Mammary epithelial cell (primary cell): ENCODE measurements at regions of chr20 and their contacts with region 1.

Region 1: DNA sequence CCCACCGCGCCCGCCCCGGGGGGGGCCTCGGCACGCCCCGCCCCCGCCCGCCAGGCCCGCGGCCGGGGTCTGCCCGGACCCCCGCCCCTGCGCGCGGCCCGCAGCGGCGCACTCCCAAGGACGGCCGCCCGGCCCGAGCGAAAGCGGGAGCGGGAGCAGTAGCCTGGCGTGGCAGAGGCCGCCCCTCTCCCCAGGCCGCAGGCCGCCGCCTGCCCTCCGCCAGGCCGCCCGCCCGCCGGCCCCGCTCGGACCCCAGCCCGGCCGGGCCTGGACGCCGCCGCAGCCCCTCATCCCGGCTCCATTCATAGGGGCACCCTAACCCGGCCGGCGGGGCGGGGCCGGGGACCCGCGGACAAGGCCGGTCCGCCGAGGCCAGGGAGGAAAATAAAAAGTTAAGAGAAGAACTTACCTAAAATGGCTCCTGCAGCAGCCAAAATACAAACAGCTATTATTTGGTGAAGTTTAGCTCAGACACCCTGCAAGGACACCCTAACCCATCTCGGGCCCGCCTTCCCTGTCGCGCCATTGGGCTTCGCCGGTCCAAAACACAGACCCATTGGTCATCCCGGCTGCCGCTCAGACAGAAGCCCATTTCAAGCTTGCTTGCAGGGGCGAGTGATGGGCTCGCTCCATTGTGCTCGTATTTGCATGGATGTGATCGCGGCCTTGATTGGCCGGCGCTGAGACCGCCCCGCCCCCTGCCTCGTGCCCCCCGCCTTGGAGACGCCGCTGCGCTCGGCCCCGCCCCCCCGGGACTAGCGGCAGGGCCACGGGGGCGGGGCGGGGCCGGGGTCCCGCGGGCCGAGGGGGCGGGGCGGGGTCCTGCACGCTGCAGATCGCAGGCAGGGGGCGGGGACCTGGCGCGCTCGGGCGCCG is at the start of gene CHD6:
- DNase-seq: peak; percentile 99
- H3K4me3 ChIP-seq: peak within 1 kb of the TSS; percentile 71 to 91 (median 74)
- H3K27ac ChIP-seq: peak within 1 kb of the TSS; percentile 71
- H3K4me1 ChIP-seq: peaks cover 12% of the 10 kb centered on the region
- H3K27me3 ChIP-seq: no peaks in the 10 kb centered on the region
- CTCF ChIP-seq: no peak
- total RNA-seq, gene CHD6: 27.0 to 28.2 TPM

Region 2: DNA sequence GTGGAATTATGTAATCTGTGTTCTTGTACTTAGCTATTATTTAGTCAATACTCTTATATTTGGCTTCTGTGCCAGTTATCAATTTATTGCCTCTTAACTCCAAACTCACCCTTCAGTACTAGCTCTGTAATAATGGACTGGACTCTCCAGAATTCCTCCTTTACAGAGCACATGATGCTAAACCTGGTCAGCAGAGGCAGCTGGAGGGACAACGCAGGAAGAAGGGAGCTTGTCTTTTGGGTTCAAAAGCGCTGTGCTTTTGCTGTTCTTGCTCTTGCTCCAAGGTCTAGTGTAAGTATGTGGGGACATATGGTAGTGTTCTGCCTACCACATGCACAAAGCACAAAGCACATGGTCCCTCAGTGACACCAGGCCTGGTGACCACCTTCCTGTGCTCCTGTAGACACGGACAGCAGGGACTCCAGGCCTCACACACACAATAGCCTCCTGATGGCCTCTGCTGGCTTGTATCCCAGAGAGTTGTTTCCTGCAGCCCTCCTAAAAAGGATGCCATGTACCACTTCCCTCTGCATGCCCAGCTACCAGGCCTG is 46.1 kb before region 1 on chr20:
- CTCF ChIA-PET with region 1: interaction called, 3 read pairs
- dilution Hi-C with region 1: no loop called
- in situ Hi-C with region 1: no loop called
- intact Hi-C with region 1: loop called (anchors 5 kb)
- DNase-seq: no peak
- H3K4me3 ChIP-seq: no peak overlapping the region
- H3K27ac ChIP-seq: no peak overlapping the region
- H3K4me1 ChIP-seq: peaks cover 3% of the 10 kb centered on the region
- H3K27me3 ChIP-seq: no peaks in the 10 kb centered on the region
- CTCF ChIP-seq: no peak

Region 3: GRCh38 chr20:41645372-41645771 is 27.2 kb after region 1 on chr20:
- CTCF ChIA-PET with region 1: no interaction called
- dilution Hi-C with region 1: no loop called
- in situ Hi-C with region 1: no loop called
- intact Hi-C with region 1: loop called (anchors 1 kb)
- DNase-seq: peak; percentile 82
- H3K4me3 ChIP-seq: no peak overlapping the region
- H3K27ac ChIP-seq: peak overlapping the region; percentile 28
- H3K4me1 ChIP-seq: peaks cover 32% of the 10 kb centered on the region
- H3K27me3 ChIP-seq: no peaks in the 10 kb centered on the region
- CTCF ChIP-seq: no peak

Region 4: GRCh38 chr20:41693136-41693979 is 75.2 kb after region 1 on chr20:
- CTCF ChIA-PET with region 1: interaction called, 5 read pairs
- dilution Hi-C with region 1: no loop called
- in situ Hi-C with region 1: loop called in 1 of 2 experiments (anchors 10 kb)
- intact Hi-C with region 1: loop called (anchors 2 kb)
- DNase-seq: peak; percentile 73
- H3K4me3 ChIP-seq: peak overlapping the region; percentile 75 to 82 (median 76)
- H3K27ac ChIP-seq: peak overlapping the region; percentile 20
- H3K4me1 ChIP-seq: no peaks in the 10 kb centered on the region
- H3K27me3 ChIP-seq: no peaks in the 10 kb centered on the region
- CTCF ChIP-seq: peak; percentile 13 to 48